ENCODE measurements at regions of chr18 and their contacts with region 1.

Region 1: DNA sequence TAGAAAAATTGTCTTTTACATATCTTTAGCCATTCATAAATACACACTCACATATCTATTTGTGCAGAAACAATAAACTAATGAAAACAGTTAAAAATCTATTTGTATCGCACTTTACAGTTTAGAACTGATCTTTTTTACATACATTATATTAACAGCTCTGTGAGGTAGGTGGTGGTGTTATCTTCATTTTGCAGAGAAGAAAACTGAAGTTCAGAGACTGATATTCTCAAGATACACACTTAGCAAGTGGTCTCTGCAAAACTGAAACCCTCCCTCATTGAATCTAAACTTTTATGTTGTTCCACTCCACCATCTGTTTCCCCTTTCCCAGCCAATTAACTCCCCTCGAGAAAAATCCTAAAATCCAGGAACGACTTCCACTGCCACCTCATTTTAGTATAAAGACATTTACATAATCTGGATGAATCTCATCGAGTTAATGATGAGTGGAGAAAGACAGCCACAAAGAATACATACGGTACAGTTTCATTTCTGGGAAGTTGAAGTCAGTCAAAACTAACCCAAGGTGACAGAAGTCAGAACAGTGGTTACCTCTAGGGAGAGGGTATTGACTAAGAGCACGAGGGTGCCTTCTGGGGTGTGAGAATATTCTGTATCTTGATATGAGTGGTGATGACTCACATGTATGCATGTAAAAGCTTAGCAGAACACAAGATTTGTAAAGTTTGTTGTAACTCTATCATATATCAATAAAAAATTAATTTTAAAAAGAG is 524.2 kb upstream of the TCF4 start:
- DNase-seq: peak; percentile 1
- H3K4me3 Mint-ChIP-seq: no peak overlapping the region
- H3K27ac Mint-ChIP-seq: peak overlapping the region; percentile 20
- H3K4me1 Mint-ChIP-seq: peaks cover 13% of the 10 kb centered on the region
- H3K27me3 Mint-ChIP-seq: peaks cover 4% of the 10 kb centered on the region

Region 2: DNA sequence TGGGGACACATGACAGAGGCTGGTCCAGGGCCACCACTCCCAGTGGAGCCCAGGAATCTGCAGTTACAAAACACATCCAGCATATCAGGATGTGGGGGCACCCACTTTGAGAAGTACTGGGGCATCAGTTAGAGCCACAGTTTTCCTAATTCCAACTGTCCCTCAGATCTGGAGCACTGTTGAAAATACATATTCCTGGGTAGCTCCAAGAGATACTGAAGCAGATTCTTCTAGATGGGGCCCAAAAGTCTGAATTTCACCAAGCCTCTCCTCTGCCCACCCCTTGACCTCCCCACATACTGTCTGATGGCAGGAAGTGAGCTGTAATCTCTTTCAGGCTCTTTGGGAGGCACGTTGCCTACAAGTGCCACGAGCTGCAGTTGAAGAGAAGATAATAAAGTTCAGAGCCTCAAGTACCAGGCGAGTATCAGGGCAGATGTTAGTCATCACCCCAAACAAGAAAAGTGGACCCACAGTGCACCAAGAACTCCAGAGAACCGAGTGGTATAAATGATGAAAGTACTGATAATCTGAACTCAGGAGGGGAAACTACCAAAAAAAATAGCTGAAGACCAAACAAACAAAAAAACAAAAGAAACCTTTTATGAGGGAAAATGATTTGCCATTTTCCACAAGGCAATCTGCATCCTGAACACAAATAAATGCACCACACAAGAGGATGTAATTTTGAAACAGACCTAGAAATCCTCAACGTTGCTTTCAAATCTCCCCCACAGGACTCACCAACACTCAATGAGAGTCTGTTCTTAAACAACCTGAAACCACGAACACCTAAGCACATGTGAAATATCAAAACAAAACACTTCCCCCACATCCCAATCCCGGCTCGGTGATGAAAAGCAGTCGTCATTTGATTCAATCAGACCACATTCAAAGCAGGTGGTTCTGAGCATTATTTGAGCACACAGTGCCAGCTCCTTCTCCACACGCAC is 622.9 kb before region 1 on chr18:
- intact Hi-C with region 1: loop called (anchors 5 kb)
- DNase-seq: no peak
- H3K4me3 Mint-ChIP-seq: no peak overlapping the region
- H3K27ac Mint-ChIP-seq: peak overlapping the region; percentile 41
- H3K4me1 Mint-ChIP-seq: peaks cover 9% of the 10 kb centered on the region
- H3K27me3 Mint-ChIP-seq: peaks cover 23% of the 10 kb centered on the region

Region 3: GRCh38 chr18:56173542-56174220 is 61.5 kb after region 1 on chr18:
- intact Hi-C with region 1: no loop called
- DNase-seq: no peak
- H3K4me3 Mint-ChIP-seq: no peak overlapping the region
- H3K27ac Mint-ChIP-seq: no peak overlapping the region
- H3K4me1 Mint-ChIP-seq: no peaks in the 10 kb centered on the region
- H3K27me3 Mint-ChIP-seq: no peaks in the 10 kb centered on the region

Measured in activated T-helper 1 cell treated with anti-CD3 and anti-CD28 coated beads, Interleukin-12 subunit alpha, Interleukin-12 subunit beta, Interleukin-2, Interleukin-4 antibody, amounts not matched to agents 30 ng/mL and 10 ng/mL and 1 ng/mL, durations not matched to agents 14 hours and 24 hours and 36 hours (primary cell).